ENCODE measurements at regions of chr13 and their contacts with region 1.

Region 1: DNA sequence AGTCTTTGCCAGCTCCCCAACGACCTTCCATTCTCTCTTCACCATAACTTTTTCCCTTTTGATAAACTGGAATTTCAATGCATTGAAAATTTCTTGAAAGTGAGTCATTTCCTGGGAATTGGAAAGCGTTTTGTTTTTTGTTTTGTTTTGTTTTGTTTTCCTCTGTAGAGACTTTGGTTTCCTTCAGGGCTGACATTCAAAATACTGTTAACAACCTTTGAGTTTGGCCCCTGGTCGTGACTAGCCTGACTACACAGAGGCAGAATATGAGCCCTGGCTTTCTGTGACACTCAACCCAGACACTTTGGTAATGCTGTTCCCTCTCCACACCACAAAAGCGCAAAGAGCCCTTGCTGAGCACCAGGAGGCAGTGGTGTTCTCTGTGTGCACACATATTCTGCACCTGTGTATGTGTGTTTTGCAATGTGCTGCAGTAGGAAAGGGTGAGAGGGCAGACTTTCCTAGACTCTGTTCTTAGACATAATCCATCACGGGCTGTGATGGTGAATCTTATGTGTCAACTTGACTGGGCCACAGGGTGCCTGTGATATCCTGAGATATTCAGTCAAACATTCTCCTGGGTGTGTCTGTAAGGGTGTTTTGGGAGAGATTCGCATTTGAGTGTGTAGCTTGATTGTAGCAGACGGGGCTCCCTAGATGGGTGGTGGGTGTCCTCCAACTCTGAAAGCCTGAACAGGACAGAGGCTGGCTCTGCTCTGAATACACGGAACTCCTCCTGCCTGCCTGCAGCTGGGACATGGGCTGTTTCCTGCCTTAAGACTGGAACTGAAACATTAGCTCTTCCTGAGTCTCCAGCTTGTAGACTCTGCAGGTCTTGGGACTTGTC is 29.5 kb upstream of the ANKRD10 start:
- DNase-seq: peak in 5 of 7 donors; percentile 24 to 51 (median 47)
- H3K4me3 ChIP-seq: no peak overlapping the region
- H3K27ac ChIP-seq: peak overlapping the region in 1 of 5 donors; percentile 17
- H3K4me1 ChIP-seq: no peaks in the 10 kb centered on the region
- H3K27me3 ChIP-seq: no peaks in the 10 kb centered on the region
- CTCF ChIP-seq: peak; percentile 18 to 55 (median 45)
- POLR2A ChIP-seq: no peak

Region 2: DNA sequence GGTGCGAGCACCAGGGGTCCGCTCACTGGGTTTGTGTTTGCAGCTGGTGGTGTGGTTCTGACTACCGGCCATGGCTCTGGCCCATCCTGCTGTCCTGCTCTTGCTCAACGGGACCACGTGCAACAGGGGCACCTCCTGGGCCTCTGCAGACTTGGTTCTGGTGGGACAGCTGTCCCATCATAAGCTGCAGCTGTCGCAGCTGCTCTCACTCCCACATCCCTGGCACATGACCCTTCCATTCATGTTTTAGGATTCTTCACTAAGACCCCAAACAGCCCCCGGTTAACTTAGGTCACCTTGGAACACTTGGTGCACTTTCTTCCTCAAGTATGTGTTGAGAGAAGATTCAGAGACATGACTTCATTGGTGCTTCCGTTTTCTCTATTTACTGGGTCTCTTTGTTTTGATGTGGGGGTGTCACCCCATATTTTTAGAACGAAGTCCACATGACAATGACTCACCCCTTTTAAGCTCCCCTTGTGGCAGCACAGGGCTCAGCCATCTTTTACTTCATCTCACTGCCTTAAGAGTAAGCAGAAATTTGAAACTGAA is 102.3 kb after region 1 on chr13:
- intact Hi-C with region 1: loop called in 1 of 2 experiments (anchors 10 kb)
- DNase-seq: peak in 2 of 7 donors; percentile 15 to 31
- H3K4me3 ChIP-seq: no peak overlapping the region
- H3K27ac ChIP-seq: peak overlapping the region in 1 of 5 donors; percentile 59
- H3K4me1 ChIP-seq: no peaks in the 10 kb centered on the region
- H3K27me3 ChIP-seq: no peaks in the 10 kb centered on the region
- CTCF ChIP-seq: peak in 3 of 6 experiments; percentile 12 to 41 (median 28)
- POLR2A ChIP-seq: no peak

Measured in adrenal gland (tissue), 19 donors.